ENCODE measurements at regions of chr16 and their contacts with region 1.

Region 1: DNA sequence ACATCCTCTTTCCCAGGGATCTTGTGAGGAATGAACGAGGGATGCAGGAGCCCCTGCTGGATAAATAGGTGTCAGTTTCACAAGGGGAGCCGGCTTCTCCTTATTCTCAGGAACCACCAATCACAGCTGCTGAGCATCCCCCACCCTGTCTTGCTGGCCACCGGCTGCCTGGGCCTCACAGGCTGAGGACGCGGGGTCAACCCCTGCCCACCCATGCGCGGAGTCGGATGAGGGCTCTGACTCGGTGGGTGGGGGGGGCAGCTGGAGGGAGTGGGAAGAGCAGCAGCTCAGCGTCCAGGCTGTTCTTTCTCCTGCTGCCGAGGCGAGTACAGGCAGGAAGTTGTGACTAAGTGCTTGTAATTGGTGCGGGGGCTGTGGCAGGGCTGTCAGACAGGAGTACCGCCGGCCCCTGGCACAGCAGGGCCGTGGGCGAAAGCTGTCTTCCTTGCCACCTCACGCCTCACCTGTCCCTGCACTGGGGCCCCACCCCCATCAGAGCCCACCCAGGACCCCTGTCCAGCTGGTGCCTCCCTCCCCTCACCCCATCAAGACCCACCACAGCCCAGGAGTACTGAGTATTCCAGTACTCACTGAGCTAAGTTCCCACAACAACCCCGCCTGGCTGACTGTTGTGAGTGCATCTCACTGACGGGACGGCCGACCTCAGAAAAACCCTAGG is 11.0 kb upstream of the DPEP1 start:
- DNase-seq: peak; percentile 51
- ATAC-seq: peak; percentile 46
- H3K4me3 Mint-ChIP-seq: no peak overlapping the region
- H3K27ac Mint-ChIP-seq: no peak overlapping the region
- H3K4me1 Mint-ChIP-seq: peaks cover 13% of the 10 kb centered on the region
- H3K27me3 Mint-ChIP-seq: no peaks in the 10 kb centered on the region
- CTCF ChIP-seq: no peak

Region 2: GRCh38 chr16:89565506-89566372 is 36.7 kb before region 1 on chr16:
- CTCF ChIA-PET with region 1: interaction called, 12 read pairs
- POLR2A ChIA-PET with region 1: no interaction called
- DNase-seq: peak; percentile 77
- ATAC-seq: peak; percentile 40
- H3K4me3 Mint-ChIP-seq: peak overlapping the region; percentile 99
- H3K27ac Mint-ChIP-seq: peak overlapping the region; percentile 96
- H3K4me1 Mint-ChIP-seq: peaks cover 48% of the 10 kb centered on the region
- H3K27me3 Mint-ChIP-seq: no peaks in the 10 kb centered on the region
- CTCF ChIP-seq: peak; percentile 85

Region 3: DNA sequence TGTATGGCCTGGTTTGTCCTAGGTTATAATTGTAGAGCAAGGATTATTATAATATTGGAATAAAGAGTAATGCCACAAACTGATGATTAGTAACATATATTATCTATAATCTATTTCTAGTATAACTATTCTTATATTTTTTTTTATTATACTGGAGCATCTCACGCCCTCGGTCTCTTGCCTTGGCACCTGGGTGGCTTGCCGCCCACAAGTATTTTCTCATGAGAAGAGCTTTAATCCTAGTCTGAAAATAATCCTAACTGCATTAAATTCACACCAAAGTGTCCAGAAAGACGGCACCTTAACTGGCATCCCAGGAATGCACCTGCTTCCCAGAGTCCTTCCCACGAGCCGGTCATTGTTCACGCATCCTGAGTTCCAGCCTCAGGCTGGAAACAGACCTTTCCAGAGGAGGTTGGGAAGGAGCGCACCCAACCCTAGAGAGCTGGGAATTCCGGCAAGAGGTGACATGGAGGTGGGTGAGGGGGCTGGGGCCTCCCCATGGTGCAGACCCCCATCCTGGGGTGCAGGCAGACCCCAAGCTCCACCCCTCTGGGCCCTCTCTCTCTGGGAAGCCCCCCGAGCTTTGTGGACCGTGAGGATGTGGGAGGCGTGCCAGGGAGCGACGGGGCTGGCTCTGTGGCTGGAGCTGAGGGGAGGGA is 39.2 kb after region 1 on chr16:
- CTCF ChIA-PET with region 1: interaction called, 26 read pairs
- POLR2A ChIA-PET with region 1: no interaction called
- DNase-seq: no peak
- ATAC-seq: no peak
- H3K4me3 Mint-ChIP-seq: no peak overlapping the region
- H3K27ac Mint-ChIP-seq: no peak overlapping the region
- H3K4me1 Mint-ChIP-seq: peaks cover 7% of the 10 kb centered on the region
- H3K27me3 Mint-ChIP-seq: no peaks in the 10 kb centered on the region
- CTCF ChIP-seq: no peak; the same call in 1 of the 2 replicates